ENCODE measurements at regions of chr5 and their contacts with region 1.

Region 1: GRCh38 chr5:62340392-62340791 is 34.4 kb downstream of the KIF2A start:
- DNase-seq: peak in 2 of 9 donors; percentile 18 to 37
- ATAC-seq: peak; percentile 31
- H3K4me3 ChIP-seq: no peak overlapping the region
- H3K4me3 Mint-ChIP-seq: peak overlapping the region in 1 of 10 donors; percentile 16
- H3K27ac ChIP-seq: no peak overlapping the region
- H3K27ac Mint-ChIP-seq: peak overlapping the region in 3 of 9 donors; percentile 7 to 21 (median 17)
- H3K4me1 ChIP-seq: peaks cover 16 to 19% of the 10 kb centered on the region in 2 donors
- H3K4me1 Mint-ChIP-seq: peaks cover 32 to 72% (median 66%) of the 10 kb centered on the region in 7 donors
- H3K27me3 ChIP-seq: no peaks in the 10 kb centered on the region
- H3K27me3 Mint-ChIP-seq: no peaks in the 10 kb centered on the region

Region 2: DNA sequence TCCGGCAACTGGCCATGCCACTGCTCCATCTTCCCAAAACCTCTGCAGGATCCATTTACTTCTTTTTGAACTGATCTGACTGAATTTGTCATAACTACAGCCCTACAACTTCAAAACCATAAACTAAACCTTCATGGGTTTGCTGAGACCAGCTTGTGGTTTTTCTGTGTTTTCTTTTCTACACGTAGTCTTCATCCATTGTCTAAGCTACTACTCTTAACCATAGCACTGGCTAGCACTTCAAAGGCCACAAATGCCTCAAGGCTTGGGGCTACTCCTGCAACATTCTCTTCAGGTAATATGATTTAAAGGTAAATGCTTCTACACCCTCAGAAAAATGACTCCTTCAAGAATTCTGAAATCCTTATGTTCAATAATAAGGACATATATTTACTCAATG is 43.4 kb before region 1 on chr5:
- CTCF ChIA-PET with region 1: interaction called, 3 read pairs
- POLR2A ChIA-PET with region 1: interaction called, 3 read pairs
- intact Hi-C with region 1: loop called in 1 of 2 experiments (anchors 2 kb)
- DNase-seq: peak in 3 of 9 donors; percentile 18 to 21 (median 20)
- ATAC-seq: no peak
- H3K4me3 ChIP-seq: no peak overlapping the region
- H3K4me3 Mint-ChIP-seq: peak overlapping the region; percentile 30 to 81 (median 72)
- H3K27ac ChIP-seq: no peak overlapping the region
- H3K27ac Mint-ChIP-seq: peak overlapping the region in 8 of 9 donors; percentile 15 to 84 (median 74)
- H3K4me1 ChIP-seq: peaks cover 46% of the 10 kb centered on the region in 2 donors
- H3K4me1 Mint-ChIP-seq: peaks cover 24 to 69% (median 55%) of the 10 kb centered on the region in 7 donors
- H3K27me3 ChIP-seq: no peaks in the 10 kb centered on the region
- H3K27me3 Mint-ChIP-seq: no peaks in the 10 kb centered on the region

Region 3: DNA sequence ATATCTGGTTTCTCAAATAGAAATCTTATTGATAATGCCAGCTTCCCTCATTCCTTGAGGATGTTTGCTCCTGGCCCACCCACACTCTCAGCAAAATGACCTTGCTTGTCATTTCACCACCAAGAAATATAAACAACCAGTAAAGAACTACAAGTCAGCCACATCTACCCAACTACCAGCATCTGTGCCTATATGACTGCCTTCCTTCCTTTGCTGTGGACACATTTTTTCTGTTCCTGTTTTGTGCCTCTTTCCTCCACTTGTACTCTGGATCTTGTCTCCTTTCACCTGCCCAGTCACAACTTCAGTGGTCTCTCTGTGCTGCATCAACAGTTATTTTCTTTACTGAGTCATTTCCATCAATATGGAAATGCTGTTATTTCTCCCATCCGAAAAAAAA is 14.1 kb before region 1 on chr5:
- CTCF ChIA-PET with region 1: interaction called, 4 read pairs
- POLR2A ChIA-PET with region 1: interaction called, 4 read pairs
- intact Hi-C with region 1: loop called in 1 of 2 experiments (anchors 2 kb)
- DNase-seq: no peak
- ATAC-seq: no peak
- H3K4me3 ChIP-seq: no peak overlapping the region
- H3K4me3 Mint-ChIP-seq: peak overlapping the region in 8 of 10 donors; percentile 2 to 43 (median 25)
- H3K27ac ChIP-seq: peak overlapping the region; percentile 31
- H3K27ac Mint-ChIP-seq: peak overlapping the region; percentile 21 to 81 (median 38)
- H3K4me1 ChIP-seq: peaks cover 12 to 34% of the 10 kb centered on the region in 2 donors
- H3K4me1 Mint-ChIP-seq: peaks cover 48 to 87% (median 82%) of the 10 kb centered on the region in 7 donors
- H3K27me3 ChIP-seq: no peaks in the 10 kb centered on the region
- H3K27me3 Mint-ChIP-seq: no peaks in the 10 kb centered on the region

Measured in naive thymus-derived CD4-positive, alpha-beta T cell (primary cell).